H1 (cell line): ENCODE measurements at regions of chr21 and their contacts with region 1.

Region 1: GRCh38 chr21:31895077-31895835 is 22.4 kb downstream of the HUNK start:
- DNase-seq: no peak
- H3K4me3 ChIP-seq: no peak overlapping the region
- H3K27ac ChIP-seq: no peak overlapping the region
- H3K4me1 ChIP-seq: peaks cover 10 to 25% (median 23%) of the 10 kb centered on the region in 4 experiments; a peak in 6 of 7 replicates
- H3K27me3 ChIP-seq: no peaks in the 10 kb centered on the region
- CTCF ChIP-seq: no peak
- EP300 ChIP-seq: no peak
- POLR2A ChIP-seq: no peak
- RAD21 ChIP-seq: no peak

Region 2: DNA sequence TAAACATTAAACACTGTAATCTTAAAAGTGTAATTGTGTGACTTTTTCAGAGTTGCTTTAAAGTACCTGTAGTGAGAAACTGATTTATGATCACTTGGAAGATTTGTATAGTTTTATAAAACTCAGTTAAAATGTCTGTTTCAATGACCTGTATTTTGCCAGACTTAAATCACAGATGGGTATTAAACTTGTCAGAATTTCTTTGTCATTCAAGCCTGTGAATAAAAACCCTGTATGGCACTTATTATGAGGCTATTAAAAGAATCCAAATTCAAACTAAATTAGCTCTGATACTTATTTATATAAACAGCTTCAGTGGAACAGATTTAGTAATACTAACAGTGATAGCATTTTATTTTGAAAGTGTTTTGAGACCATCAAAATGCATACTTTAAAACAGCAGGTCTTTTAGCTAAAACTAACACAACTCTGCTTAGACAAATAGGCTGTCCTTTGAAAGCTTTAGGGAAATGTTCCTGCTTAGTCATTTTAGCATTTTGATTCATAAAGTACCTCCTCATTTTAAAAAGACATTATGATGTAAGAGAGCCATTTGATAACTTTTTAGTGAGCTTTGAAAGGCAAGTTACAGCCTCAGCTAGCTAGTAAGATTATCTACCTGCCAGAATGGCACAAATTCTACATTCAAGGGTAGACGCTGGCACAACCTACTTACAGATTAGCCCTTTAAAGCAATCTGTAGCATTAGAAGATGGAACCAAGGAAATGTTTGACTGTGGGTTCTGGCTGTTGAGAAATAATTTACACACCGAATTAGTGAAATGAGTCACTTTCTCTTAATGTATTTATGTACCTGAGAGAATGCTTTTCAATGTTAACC is 226.4 kb before region 1 on chr21:
- CTCF ChIA-PET with region 1: no interaction called
- POLR2A ChIA-PET with region 1: no interaction called
- DNase-seq: no peak
- H3K4me3 ChIP-seq: no peak overlapping the region
- H3K27ac ChIP-seq: no peak overlapping the region
- H3K4me1 ChIP-seq: peaks cover 2 to 3% (median 3%) of the 10 kb centered on the region in 4 experiments; a peak in 6 of 7 replicates
- H3K27me3 ChIP-seq: no peaks in the 10 kb centered on the region
- CTCF ChIP-seq: no peak
- EP300 ChIP-seq: no peak
- POLR2A ChIP-seq: no peak
- RAD21 ChIP-seq: no peak

Region 3: DNA sequence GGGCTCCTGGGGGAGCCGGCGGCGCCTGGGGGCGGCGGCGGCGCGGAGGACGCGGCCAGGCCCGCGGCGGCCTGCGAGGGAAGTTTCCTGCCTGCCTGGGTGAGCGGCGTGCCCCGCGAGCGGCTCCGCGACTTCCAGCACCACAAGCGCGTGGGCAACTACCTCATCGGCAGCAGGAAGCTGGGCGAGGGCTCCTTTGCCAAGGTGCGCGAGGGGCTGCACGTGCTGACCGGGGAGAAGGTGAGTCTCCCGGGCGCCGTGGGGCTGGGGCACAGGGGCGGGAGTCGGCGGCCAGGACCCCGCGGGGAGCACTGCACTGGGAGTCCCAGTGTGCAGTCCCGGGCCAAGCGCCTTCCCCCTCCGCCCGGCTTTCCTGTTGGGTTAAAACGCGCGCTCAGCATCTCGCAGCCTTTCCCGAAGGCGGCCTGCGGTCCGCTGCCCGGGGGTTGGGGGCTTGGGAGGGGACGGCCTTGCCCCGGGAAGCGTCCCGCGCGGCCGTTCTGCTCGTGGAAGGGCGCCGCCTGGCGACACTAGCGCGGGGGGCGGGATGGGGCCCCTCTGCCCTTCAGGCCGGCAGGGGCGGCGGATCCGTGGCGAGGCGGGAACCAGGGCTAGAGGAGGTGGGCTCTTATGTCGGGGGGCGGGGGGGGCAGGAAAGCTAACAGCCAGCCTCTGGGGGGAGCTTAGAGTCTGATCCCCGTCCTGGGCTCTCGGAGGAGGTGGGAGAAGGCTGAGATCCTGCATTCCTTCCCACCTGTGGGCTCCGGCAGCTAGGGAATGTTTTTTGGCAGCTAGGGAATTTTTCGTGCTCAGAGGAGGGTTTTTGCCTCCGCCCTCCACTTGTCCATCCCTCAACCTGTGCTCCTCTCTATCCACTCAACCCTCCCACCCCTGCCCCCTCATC is 21.3 kb before region 1 on chr21:
- CTCF ChIA-PET with region 1: interaction called, 42 read pairs
- POLR2A ChIA-PET with region 1: interaction called, 4 read pairs
- DNase-seq: peak in 1 of 2 experiments; percentile 89
- H3K4me3 ChIP-seq: peak overlapping the region; percentile 58 to 86 (median 68)
- H3K27ac ChIP-seq: no peak overlapping the region
- H3K4me1 ChIP-seq: peaks cover 4 to 17% (median 7%) of the 10 kb centered on the region in 4 experiments
- H3K27me3 ChIP-seq: peaks cover 0 to 9% (median 7%) of the 10 kb centered on the region in 4 experiments; a peak in 4 of 7 replicates
- CTCF ChIP-seq: peak; percentile 54 to 75 (median 65)
- EP300 ChIP-seq: no peak
- POLR2A ChIP-seq: no peak
- RAD21 ChIP-seq: peak; percentile 32 to 61; a peak in 2 of 4 replicates

Region 4: DNA sequence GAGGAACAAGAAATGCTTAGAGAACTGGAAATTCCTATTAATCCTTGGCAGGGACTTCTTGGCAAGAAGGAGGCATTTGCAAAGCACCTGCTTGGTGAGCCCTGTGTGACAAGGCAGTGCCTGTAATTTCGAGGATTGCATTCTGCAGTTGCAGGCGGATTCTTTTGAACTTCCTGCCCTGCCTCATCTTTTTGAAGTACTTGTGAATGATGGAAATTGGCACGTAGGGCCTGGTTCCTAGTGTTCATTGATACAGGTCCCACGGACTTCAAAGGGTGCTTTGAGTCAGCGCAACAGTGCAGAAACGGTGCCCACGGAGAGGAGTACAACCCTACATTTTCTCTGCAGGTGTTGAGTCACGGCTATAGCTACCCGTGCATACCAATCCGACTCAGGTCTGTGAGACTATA is 16.0 kb before region 1 on chr21:
- CTCF ChIA-PET with region 1: interaction called, 42 read pairs
- POLR2A ChIA-PET with region 1: interaction called, 4 read pairs
- DNase-seq: no peak
- H3K4me3 ChIP-seq: no peak overlapping the region
- H3K27ac ChIP-seq: no peak overlapping the region
- H3K4me1 ChIP-seq: peaks cover 4 to 20% (median 10%) of the 10 kb centered on the region in 4 experiments
- H3K27me3 ChIP-seq: peaks cover 0 to 3% (median 0%) of the 10 kb centered on the region in 4 experiments; a peak in 3 of 7 replicates
- CTCF ChIP-seq: no peak
- EP300 ChIP-seq: no peak
- POLR2A ChIP-seq: no peak
- RAD21 ChIP-seq: no peak

Region 5: GRCh38 chr21:31927689-31928353 is 32.6 kb after region 1 on chr21:
- CTCF ChIA-PET with region 1: interaction called, 12 read pairs
- POLR2A ChIA-PET with region 1: interaction called, 3 read pairs
- DNase-seq: no peak
- H3K4me3 ChIP-seq: no peak overlapping the region
- H3K27ac ChIP-seq: no peak overlapping the region
- H3K4me1 ChIP-seq: peaks cover 0 to 11% (median 4%) of the 10 kb centered on the region in 4 experiments; a peak in 5 of 7 replicates
- H3K27me3 ChIP-seq: no peaks in the 10 kb centered on the region
- CTCF ChIP-seq: no peak
- EP300 ChIP-seq: no peak
- POLR2A ChIP-seq: no peak
- RAD21 ChIP-seq: no peak

Region 6: GRCh38 chr21:32021319-32021994 is 126.2 kb after region 1 on chr21:
- CTCF ChIA-PET with region 1: no interaction called
- POLR2A ChIA-PET with region 1: no interaction called
- DNase-seq: no peak
- H3K4me3 ChIP-seq: no peak overlapping the region
- H3K27ac ChIP-seq: no peak overlapping the region
- H3K4me1 ChIP-seq: no peaks in the 10 kb centered on the region
- H3K27me3 ChIP-seq: no peaks in the 10 kb centered on the region
- CTCF ChIP-seq: no peak
- EP300 ChIP-seq: no peak
- POLR2A ChIP-seq: no peak
- RAD21 ChIP-seq: no peak